HEK293T (cell line): ENCODE measurements at regions of chr6 and their contacts with region 1.

Region 1: GRCh38 chr6:156942266-156942665 is 165.1 kb downstream of the ARID1B start:
- DNase-seq: peak; percentile 61

Region 2: GRCh38 chr6:156866220-156867015 is 75.8 kb before region 1 on chr6:
- CTCF ChIA-PET with region 1: no interaction called
- POLR2A ChIA-PET with region 1: no interaction called
- DNase-seq: no peak

Region 3: DNA sequence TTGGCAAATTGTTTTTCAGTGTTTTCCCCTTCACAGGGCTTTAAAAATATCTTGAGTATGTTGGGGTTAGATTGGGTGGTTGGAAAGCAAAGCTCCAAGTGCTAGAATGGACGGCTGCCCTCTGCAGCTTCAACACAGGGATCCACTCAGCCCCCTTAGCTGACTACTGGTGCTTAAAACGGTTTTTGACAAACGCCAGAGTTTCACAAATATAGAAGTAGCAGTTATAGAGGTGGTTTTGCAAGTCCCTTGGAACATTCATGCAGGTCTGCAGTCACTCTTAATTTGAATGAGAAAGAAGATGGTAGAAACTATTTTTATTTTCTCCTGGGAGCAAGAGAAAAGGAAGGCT is 10.8 kb after region 1 on chr6:
- CTCF ChIA-PET with region 1: interaction called, 10 read pairs
- POLR2A ChIA-PET with region 1: no interaction called
- DNase-seq: no peak

Region 4: DNA sequence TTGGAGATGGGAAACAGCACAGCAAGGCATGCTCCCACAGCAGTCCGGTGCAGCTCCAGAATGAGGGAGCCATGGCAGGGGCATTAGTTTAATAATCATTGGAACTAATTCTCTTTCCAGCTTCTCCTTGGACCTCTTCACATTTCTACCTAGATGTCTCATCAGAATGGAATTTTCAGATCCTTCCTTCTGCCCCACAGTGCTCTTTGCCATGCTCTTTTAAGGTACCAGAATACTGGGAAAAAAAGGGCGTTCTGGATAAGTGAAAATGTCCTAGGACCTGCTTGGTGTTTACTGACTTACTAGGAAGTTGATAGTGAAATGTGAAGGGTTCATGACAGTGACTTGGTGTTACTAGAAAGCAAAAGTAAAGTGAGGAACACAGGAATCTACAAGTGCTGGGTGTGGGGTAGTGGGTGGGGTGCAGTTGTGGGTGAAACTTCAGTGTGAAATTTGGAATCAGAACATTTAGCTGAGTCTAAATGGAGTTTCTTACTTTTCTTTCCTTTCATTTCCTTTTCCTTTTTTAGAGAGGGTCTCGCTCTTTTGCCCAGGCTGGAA is 42.0 kb after region 1 on chr6:
- CTCF ChIA-PET with region 1: no interaction called
- POLR2A ChIA-PET with region 1: no interaction called
- DNase-seq: no peak

Region 5: DNA sequence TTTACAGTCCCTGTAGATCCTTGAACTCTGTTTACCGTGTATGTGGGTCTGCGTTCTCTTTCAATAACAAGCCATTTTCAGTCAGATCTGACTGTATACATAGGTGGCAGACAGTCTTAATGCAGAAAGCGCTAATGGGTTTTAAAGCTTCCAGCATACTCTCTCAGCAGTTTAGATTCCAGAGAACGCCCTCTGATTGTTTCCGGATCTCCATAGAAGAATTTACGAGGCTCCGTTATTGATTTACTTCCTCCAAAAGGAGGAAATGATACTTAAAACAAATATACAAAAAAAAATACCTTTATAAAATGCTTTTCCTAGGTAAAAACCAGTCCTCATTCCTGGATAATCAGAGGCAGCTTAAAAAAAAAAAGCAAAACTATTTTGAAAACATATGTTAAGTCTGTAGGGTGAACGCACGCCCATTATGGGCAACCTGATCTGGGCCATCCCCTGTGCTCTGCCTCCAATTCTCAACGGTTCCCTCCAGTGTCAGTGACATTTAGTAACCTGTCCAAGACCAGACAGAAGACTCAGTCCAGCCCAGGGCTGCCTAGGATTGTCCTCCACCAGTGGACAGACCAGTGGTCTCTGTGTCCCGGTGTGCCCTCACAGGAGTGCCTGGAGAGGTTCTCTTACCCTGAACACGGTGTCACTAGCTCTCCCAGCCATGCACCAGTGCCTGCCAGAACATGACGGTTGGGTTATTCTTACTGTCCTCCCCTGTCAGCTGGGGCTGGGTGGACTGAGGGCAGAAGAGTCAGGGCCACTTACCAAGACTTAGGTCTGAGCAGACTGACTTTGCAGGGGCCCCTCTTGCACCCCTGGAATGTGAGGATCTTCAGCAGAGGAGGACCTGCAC is 52.2 kb after region 1 on chr6:
- CTCF ChIA-PET with region 1: no interaction called
- POLR2A ChIA-PET with region 1: no interaction called
- DNase-seq: peak; percentile 31